Activated T-helper 1 cell treated with anti-CD3 and anti-CD28 coated beads, Interleukin-12 subunit alpha, Interleukin-12 subunit beta, Interleukin-2, Interleukin-4 antibody, amounts not matched to agents 30 ng/mL and 10 ng/mL and 1 ng/mL, durations not matched to agents 14 hours and 24 hours and 36 hours (primary cell): ENCODE measurements at regions of chr3 and their contacts with region 1.

Region 1: DNA sequence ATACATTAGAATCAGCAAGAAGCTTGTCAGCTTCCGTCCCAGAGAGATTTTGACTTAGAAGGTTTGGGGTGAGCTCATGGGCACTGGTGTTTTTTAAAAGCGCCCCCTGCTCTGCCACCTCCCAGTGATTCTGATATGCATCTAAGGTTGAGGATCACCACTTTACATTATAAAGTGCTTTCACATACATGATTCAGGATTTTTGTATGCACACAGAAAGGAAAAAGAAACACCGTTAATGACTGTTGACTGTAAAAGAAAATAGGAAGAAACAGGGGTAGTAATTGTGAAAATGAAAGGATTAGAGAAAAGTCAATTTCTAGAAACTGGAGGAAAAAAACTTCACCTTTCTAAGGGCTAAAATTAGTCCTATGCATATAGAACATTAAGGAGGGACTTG is 104.9 kb upstream of the ZBED2 start:
- DNase-seq: no peak
- H3K4me3 Mint-ChIP-seq: peak overlapping the region; percentile 44
- H3K27ac Mint-ChIP-seq: peak overlapping the region; percentile 86
- H3K4me1 Mint-ChIP-seq: peaks cover 13% of the 10 kb centered on the region
- H3K27me3 Mint-ChIP-seq: no peaks in the 10 kb centered on the region

Region 2: DNA sequence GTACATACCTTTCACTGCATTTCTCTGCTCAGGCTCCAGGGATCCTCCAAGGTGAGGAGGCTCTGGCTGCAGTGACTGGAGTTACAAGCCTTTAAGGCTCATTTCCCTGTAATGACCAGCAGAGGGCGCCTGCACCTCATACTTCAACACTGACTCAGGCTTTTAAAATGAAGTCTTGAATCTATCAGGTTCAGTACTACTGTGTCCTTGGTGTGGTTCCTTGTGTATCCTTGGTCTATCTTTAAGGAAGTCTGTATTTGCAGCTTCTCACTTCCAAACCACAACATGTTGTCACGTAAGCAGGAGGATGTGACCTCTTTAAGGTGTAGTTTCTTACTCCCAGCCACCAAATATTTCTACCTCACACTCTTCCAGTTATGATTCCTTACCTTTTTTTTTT is 17.5 kb after region 1 on chr3:
- intact Hi-C with region 1: loop called (anchors 1 kb)
- DNase-seq: peak; percentile 44
- H3K4me3 Mint-ChIP-seq: no peak overlapping the region
- H3K27ac Mint-ChIP-seq: peak overlapping the region; percentile 70
- H3K4me1 Mint-ChIP-seq: peaks cover 8% of the 10 kb centered on the region
- H3K27me3 Mint-ChIP-seq: no peaks in the 10 kb centered on the region